Heart left ventricle (tissue), 16 donors: ENCODE measurements at regions of chr11 and their contacts with region 1.

Region 1: DNA sequence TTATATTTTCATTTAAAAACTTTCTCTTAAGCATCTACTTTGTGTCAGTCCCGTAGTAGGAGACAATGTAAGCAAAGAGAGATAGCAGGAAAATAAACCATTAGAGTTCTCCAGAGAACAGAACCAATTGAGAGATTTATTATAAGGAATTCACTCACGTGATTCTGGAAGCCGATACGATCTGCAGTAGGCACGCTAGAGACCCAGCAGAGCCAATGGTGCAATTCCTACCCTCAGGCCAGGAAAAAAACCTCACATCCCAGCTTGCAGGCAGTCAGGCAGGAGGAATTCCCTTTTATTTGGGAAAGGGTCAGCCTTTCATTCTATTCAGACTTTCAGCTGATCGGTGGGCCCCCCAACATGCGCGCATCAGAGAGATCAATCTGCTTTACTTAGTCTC is 7.3 kb upstream of the PLEKHA7 start:
- DNase-seq: no peak
- ATAC-seq: no peak
- H3K4me3 ChIP-seq: no peak overlapping the region
- H3K27ac ChIP-seq: no peak overlapping the region
- H3K4me1 ChIP-seq: no peaks in the 10 kb centered on the region
- H3K27me3 ChIP-seq: no peaks in the 10 kb centered on the region
- CTCF ChIP-seq: no peak
- POLR2A ChIP-seq: no peak

Region 2: GRCh38 chr11:16977136-16977988 is 44.1 kb before region 1 on chr11:
- intact Hi-C with region 1: loop called in 1 of 10 experiments (anchors 5 kb)
- DNase-seq: no peak
- ATAC-seq: no peak
- H3K4me3 ChIP-seq: no peak overlapping the region
- H3K27ac ChIP-seq: no peak overlapping the region
- H3K4me1 ChIP-seq: peaks cover 0 to 13% (median 4%) of the 10 kb centered on the region in 12 donors
- H3K27me3 ChIP-seq: no peaks in the 10 kb centered on the region
- CTCF ChIP-seq: no peak
- POLR2A ChIP-seq: no peak

Region 3: GRCh38 chr11:17102462-17102861 is 81.0 kb after region 1 on chr11:
- intact Hi-C with region 1: no loop called
- DNase-seq: no peak
- ATAC-seq: no peak
- H3K4me3 ChIP-seq: no peak overlapping the region
- H3K27ac ChIP-seq: peak overlapping the region in 1 of 12 donors; percentile 4
- H3K4me1 ChIP-seq: peaks cover 0 to 19% (median 0%) of the 10 kb centered on the region in 12 donors
- H3K27me3 ChIP-seq: no peaks in the 10 kb centered on the region
- CTCF ChIP-seq: no peak
- POLR2A ChIP-seq: no peak